PC-9 (cell line): ENCODE measurements at regions of chr20 and their contacts with region 1.

Region 1: GRCh38 chr20:31835977-31836852 is 9.2 kb downstream of the FOXS1 start:
- DNase-seq: peak; percentile 72 to 94
- H3K4me3 ChIP-seq: no peak overlapping the region
- H3K27ac ChIP-seq: no peak overlapping the region
- H3K4me1 ChIP-seq: peaks cover 12% of the 10 kb centered on the region
- H3K27me3 ChIP-seq: no peaks in the 10 kb centered on the region
- CTCF ChIP-seq: no peak

Region 2: DNA sequence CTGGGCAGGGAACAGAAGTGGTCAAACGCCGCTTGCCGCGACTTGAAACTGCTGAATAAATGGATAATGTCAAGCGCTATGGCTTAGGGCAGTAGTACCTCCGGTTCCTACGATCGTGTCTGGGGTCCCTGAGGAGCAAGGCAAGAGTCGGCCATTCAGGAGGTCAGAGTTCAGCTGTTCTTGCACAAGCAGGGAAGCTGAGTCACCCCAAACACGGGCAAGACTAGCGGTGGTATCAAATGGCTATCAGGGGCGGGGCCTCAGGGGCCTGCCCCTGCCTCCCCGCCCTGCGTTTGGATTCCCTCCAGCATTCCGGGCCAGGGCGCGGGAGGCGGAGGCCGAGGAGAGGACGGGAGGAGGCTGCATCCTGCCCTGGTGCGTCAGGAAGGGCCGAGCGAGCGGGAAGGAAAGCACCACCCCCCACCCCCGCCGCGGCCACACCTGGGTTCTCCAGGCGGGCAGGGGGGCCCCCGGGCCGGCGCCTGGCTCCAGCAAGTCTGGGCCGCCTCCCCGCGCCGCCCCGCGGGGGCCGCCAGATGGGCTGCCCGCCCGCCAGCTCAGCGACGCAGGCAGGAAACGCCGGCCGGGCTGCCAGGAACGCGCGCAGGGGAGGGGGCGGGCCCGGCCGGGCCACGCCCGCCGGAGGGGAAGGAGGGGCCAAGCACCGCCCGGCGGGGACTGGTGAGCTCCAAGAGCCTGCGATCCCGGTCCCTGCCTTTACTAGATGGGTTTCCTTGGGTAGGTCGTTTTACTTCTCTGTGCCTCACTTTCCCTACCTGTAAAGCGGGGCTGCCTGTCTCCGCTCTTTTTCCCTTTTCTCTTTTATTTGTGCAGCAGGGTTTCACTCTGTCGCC is 263.3 kb before region 1 on chr20:
- CTCF ChIA-PET with region 1: no interaction called
- POLR2A ChIA-PET with region 1: interaction called, 11 read pairs
- intact Hi-C with region 1: loop called (anchors 5 kb)
- DNase-seq: peak; percentile 95 to 100
- H3K4me3 ChIP-seq: peak overlapping the region; percentile 64
- H3K27ac ChIP-seq: peak overlapping the region; percentile 96
- H3K4me1 ChIP-seq: peaks cover 46% of the 10 kb centered on the region
- H3K27me3 ChIP-seq: no peaks in the 10 kb centered on the region
- CTCF ChIP-seq: no peak

Region 3: DNA sequence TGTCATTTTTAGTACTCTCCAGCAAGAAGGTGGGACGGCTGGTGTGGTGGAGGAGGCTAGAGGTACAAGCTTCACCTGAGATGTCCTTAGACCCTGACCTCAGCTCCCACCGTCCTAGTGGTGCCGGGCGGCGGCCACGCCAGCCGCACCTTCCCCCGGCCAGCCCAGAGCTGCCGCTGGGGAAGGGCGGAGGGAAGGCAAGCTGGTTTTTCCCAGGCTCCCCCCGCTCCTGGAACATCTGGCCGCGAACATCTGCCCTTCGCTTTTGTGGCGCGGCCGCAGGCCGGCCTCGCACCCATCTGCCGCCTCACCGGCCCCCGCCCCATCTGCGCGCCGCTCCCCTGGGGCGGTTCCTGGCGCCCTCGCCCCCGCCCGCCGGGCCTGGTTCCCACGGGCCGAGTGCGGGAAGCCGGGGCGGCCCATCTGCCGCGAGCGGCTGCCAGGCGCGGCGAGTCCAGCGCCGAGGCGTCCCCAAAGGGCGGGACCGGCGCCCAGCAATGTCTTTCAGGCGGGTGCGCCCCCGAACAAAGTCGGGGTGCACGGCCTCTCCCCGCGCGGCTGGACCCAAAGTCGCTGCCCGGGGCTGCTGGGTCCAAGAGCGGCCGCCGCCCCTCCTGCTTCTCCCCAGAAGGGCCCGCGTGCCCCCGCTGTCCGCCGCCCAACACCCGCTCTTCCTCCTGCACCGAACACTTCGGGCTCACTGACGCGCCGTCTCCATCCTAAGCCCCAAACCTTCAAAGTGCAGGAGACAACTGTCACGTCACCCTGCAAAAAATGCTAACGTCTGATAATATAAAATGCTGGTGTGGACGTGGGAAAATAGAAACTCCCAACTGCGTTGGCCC is 248.4 kb before region 1 on chr20:
- CTCF ChIA-PET with region 1: no interaction called
- POLR2A ChIA-PET with region 1: no interaction called
- intact Hi-C with region 1: no loop called
- DNase-seq: peak in 1 of 2 experiments; percentile 45
- H3K4me3 ChIP-seq: no peak overlapping the region
- H3K27ac ChIP-seq: no peak overlapping the region
- H3K4me1 ChIP-seq: peaks cover 32% of the 10 kb centered on the region
- H3K27me3 ChIP-seq: no peaks in the 10 kb centered on the region
- CTCF ChIP-seq: no peak

Region 4: DNA sequence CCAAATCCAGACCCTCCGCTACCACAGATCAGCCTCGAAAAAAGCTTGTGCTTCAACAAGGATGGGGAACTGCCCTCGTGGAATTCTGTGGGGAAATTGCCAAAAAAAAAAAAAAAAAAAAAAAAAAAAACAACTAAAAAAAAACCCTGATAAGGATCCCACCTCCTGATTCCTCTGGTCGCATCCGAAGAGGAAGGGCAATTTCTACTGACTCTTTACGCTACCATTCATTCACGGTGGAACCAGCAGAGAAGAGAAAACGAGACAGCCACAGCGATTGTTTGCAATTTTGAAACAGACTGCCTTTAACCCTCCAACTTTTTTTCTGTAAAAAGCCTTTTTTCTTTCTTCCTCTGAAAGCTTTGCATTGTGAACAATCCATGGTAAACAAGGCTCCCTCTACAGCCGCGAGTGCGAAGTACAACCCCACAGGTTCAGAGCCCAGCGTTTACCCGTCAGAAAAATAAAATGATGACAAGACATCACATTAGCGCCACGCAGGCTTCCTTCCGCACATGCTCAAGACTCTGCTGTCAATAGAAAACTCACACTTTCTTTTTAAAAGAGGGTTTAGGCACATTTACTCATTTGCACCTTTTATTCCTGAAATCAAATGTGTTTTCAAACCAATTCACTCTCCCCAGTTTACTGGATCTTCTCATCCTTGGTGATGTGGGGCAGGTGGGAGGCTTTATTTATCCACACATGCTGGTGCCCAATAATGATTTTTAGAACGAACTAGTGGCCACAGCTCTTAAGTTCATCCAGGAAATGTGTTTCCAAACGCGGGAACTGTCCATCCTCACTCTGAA is 648.9 kb after region 1 on chr20:
- CTCF ChIA-PET with region 1: no interaction called
- POLR2A ChIA-PET with region 1: no interaction called
- intact Hi-C with region 1: loop called (anchors 10 kb)
- DNase-seq: peak; percentile 59 to 72
- H3K4me3 ChIP-seq: peak overlapping the region; percentile 82
- H3K27ac ChIP-seq: peak overlapping the region; percentile 41; the same call in 1 of the 2 replicates
- H3K4me1 ChIP-seq: peaks cover 13% of the 10 kb centered on the region
- H3K27me3 ChIP-seq: no peaks in the 10 kb centered on the region
- CTCF ChIP-seq: peak; percentile 83